ENCODE measurements at regions of chr1 and their contacts with region 1.

Region 1: DNA sequence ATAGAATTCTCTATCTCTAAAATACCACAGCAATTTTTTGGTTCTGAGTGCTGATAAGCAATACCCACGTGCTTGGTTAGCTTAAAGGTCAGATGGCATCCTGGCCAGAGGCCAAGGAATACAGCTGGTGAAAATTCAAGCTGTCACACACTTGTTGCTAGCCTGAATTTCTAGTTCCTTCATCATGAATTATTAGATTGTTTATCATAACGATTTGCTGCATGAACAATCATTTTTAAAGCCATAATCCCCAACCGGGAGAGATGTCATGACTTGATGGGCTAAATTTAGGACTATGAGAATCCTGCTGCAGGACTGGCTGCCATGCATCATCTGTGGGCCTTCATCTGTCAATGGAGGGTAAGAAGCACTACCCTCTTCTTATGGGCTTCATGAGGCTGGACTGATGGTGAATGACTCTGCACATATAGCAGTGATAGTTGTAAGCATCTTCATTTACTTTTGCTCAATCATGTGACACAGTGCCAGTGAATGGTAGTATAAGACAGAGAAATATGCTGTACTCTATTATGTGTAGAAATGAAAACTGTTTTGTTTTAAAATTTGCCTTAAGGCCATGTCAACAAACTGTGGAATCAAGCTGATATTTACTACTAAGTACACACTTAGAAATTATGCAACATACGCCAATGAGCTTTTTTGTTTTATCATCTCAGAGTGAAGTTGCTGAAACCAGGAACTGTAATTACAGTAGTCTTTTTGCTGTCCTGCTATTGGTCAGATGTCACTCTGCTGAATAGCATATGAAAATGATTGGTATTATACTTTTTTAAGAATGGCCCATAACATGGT is 80.5 kb upstream of the RALGPS2 start:
- DNase-seq: peak; percentile 59
- ATAC-seq: 0 out of 2 replicates have a peak, but pooled peaks have one; percentile 16
- H3K4me3 ChIP-seq: no peak overlapping the region
- H3K27ac ChIP-seq: peak overlapping the region; percentile 53; the same call in 1 of the 2 replicates
- H3K4me1 ChIP-seq: peaks cover 20% of the 10 kb centered on the region
- H3K27me3 ChIP-seq: no peaks in the 10 kb centered on the region
- CTCF ChIP-seq: no peak
- POLR2A ChIP-seq: no peak
- RAD21 ChIP-seq: no peak

Region 2: DNA sequence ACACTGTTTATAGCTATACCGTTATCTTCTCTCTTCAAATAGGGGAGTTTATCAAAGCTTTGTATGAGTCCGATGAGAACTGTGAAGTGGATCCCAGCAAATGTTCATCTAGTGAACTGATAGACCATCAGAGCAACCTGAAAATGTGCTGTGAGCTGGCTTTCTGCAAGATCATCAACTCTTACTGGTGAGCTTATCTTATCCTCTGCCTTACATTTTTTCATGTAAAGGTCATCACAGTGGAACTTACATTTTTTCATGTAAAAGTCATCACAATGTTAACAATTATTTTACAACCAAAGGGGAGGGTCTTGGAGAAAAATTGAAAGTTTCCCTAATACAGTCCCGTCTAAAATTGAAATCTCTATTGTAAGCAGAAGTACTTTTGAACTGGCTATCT is 193.0 kb before region 1 on chr1:
- CTCF ChIA-PET with region 1: no interaction called
- POLR2A ChIA-PET with region 1: no interaction called
- dilution Hi-C with region 1: no loop called
- in situ Hi-C with region 1: no loop called
- intact Hi-C with region 1: no loop called
- DNase-seq: peak; percentile 80
- ATAC-seq: peak; percentile 94
- H3K4me3 ChIP-seq: no peak overlapping the region
- H3K27ac ChIP-seq: no peak overlapping the region
- H3K4me1 ChIP-seq: peaks cover 4% of the 10 kb centered on the region
- H3K27me3 ChIP-seq: no peaks in the 10 kb centered on the region
- CTCF ChIP-seq: no peak
- POLR2A ChIP-seq: no peak
- RAD21 ChIP-seq: no peak

Region 3: DNA sequence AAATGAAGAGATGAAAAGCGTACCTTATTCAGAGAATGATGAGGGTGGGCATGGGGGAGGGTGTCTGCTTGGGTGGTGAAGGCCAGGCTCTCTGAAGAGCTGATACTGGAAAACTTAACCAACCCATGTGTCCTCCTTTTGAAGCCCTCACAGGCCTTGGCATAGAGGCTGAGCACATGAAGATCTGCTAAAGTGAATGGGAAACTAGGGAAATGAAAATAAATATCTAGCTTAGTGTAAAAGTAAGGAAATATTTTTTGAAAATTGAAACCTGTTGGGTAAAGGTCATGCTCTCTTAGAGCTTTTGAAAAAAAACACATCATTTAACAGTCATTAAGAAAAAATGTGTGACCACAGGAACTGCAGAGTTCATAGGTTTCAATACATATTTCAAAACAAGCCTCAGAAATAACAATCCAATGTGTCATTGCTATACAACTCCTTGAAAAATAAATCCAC is 40.1 kb after region 1 on chr1:
- CTCF ChIA-PET with region 1: interaction called, 6 read pairs
- POLR2A ChIA-PET with region 1: no interaction called
- dilution Hi-C with region 1: no loop called
- in situ Hi-C with region 1: no loop called
- intact Hi-C with region 1: loop called (anchors 1 kb)
- DNase-seq: peak; percentile 96
- ATAC-seq: peak; percentile 85
- H3K4me3 ChIP-seq: no peak overlapping the region
- H3K27ac ChIP-seq: peak overlapping the region; percentile 89
- H3K4me1 ChIP-seq: peaks cover 17% of the 10 kb centered on the region
- H3K27me3 ChIP-seq: no peaks in the 10 kb centered on the region
- CTCF ChIP-seq: no peak
- POLR2A ChIP-seq: no peak
- RAD21 ChIP-seq: no peak

Region 4: DNA sequence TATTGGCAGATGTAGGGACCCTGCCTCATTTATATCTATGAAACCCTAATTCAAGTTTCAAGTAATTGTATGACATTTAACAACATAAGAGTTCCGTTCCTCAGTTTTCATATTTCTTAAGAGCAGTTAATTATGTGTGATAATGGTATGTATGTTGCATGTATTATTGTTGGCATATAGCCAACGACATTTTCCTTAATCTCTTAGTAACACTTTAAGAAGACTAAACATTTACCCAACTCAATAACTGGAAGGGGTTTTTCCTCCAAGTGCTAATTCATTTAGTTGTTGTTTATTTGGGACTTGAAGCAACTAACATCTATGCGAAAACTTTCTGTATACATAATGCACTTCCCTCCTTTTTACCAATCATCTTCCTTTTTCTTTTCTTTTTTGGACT is 79.0 kb after region 1 on chr1:
- CTCF ChIA-PET with region 1: no interaction called
- POLR2A ChIA-PET with region 1: no interaction called
- dilution Hi-C with region 1: no loop called
- in situ Hi-C with region 1: no loop called
- intact Hi-C with region 1: no loop called
- DNase-seq: no peak
- ATAC-seq: no peak
- H3K4me3 ChIP-seq: no peak overlapping the region
- H3K27ac ChIP-seq: no peak overlapping the region
- H3K4me1 ChIP-seq: peaks cover 3% of the 10 kb centered on the region
- H3K27me3 ChIP-seq: no peaks in the 10 kb centered on the region
- CTCF ChIP-seq: no peak
- POLR2A ChIP-seq: no peak
- RAD21 ChIP-seq: no peak

Region 5: DNA sequence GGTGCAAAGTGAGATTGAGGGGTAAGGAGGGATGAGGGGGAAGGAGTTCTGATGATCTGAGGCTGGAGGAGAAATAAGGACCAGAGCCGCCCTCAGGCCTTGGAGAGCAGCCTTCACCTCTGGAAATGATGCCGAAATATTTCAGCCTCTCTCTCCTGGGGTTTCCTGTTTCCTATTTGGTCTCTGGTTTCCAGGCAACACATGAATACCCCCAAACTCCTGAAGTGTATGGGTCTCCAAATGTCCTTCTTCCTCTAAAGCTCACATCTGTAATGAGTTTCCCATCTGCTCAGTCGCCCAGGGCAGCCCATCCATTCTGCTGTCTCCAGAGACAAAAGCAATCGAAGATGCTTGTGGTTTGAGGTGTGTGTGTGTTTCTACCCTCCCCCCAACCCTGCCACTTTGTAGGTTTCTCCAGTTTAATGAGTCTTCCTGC is 329.2 kb after region 1 on chr1:
- CTCF ChIA-PET with region 1: no interaction called
- POLR2A ChIA-PET with region 1: no interaction called
- dilution Hi-C with region 1: no loop called
- in situ Hi-C with region 1: no loop called
- intact Hi-C with region 1: no loop called
- DNase-seq: no peak
- ATAC-seq: no peak
- H3K4me3 ChIP-seq: no peak overlapping the region
- H3K27ac ChIP-seq: no peak overlapping the region
- H3K4me1 ChIP-seq: no peaks in the 10 kb centered on the region; the same call in 1 of the 2 replicates
- H3K27me3 ChIP-seq: peaks cover 10% of the 10 kb centered on the region
- CTCF ChIP-seq: no peak
- POLR2A ChIP-seq: no peak
- RAD21 ChIP-seq: no peak